ENCODE measurements at regions of chr5 and their contacts with region 1.

Region 1: GRCh38 chr5:33470544-33470943 is 29.8 kb downstream of the TARS1 start:
- DNase-seq: peak in 2 of 4 experiments; percentile 27 to 54
- ATAC-seq: peak; percentile 72
- H3K4me3 ChIP-seq: no peak overlapping the region
- H3K27ac ChIP-seq: no peak overlapping the region
- H3K4me1 ChIP-seq: peaks cover 0 to 18% of the 10 kb centered on the region in 2 experiments; a peak in 2 of 5 replicates
- H3K27me3 ChIP-seq: no peaks in the 10 kb centered on the region
- CTCF ChIP-seq: peak; percentile 29 to 51 (median 38); a peak in 4 of 6 replicates
- EP300 ChIP-seq: no peak
- POLR2A ChIP-seq: peak; percentile 28; the same call in 1 of the 2 replicates
- RAD21 ChIP-seq: peak; percentile 7 to 35; a peak in 2 of 4 replicates

Region 2: DNA sequence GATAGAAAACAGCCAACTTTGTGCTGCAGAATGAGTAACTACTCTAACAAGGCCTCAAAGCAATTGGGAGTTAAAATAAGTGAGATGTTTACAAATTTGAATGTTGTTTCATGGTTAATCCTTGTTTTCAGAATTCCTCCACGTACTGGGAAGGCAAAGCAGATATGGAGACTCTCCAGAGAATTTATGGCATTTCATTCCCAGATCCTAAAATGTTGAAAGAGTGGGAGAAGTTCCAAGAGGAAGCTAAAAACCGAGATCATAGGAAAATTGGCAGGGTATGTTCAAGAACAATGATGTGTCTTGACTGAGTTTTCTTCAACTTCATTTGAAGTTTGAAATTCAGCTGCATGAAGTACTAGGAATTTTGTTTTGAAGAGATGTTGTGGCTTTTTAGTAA is 13.4 kb before region 1 on chr5:
- CTCF ChIA-PET with region 1: no interaction called
- POLR2A ChIA-PET with region 1: interaction called, 52 read pairs
- in situ Hi-C with region 1: no loop called
- intact Hi-C with region 1: no loop called
- DNase-seq: no peak
- ATAC-seq: no peak
- H3K4me3 ChIP-seq: no peak overlapping the region
- H3K27ac ChIP-seq: no peak overlapping the region
- H3K4me1 ChIP-seq: peaks cover 0 to 9% of the 10 kb centered on the region in 2 experiments; a peak in 3 of 5 replicates
- H3K27me3 ChIP-seq: no peaks in the 10 kb centered on the region
- CTCF ChIP-seq: no peak
- EP300 ChIP-seq: no peak
- POLR2A ChIP-seq: no peak
- RAD21 ChIP-seq: no peak

Region 3: GRCh38 chr5:33903118-33903517 is 432.6 kb after region 1 on chr5:
- CTCF ChIA-PET with region 1: no interaction called
- POLR2A ChIA-PET with region 1: no interaction called
- in situ Hi-C with region 1: no loop called
- intact Hi-C with region 1: no loop called
- DNase-seq: no peak
- ATAC-seq: no peak
- H3K4me3 ChIP-seq: no peak overlapping the region
- H3K27ac ChIP-seq: no peak overlapping the region
- H3K4me1 ChIP-seq: no peaks in the 10 kb centered on the region
- H3K27me3 ChIP-seq: no peaks in the 10 kb centered on the region
- CTCF ChIP-seq: no peak
- EP300 ChIP-seq: no peak
- POLR2A ChIP-seq: no peak
- RAD21 ChIP-seq: no peak